ENCODE measurements at regions of chr11 and their contacts with region 1.

Region 1: DNA sequence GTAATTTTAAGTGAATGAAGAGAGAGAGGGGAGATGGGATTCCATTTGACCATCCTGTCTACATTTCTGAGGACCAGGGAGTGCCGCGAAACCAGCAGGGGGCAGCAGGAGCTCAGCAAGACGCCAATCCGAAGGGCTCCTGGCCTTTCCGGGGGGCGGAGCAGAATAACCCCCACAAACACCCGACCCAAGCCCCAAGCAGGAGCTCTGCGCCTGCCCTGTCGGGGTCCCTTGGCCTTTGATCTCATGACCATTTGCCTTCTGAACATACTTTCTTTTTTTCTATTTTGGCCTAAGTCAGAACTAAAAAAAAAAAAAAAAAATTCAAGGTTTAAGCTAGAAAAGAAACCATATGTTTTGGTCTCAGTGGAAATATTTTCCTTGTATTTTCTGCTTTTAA is 21.9 kb upstream of the SCN2B start:
- DNase-seq: peak; percentile 67
- H3K4me3 Mint-ChIP-seq: peak overlapping the region; percentile 21
- H3K27ac Mint-ChIP-seq: peak overlapping the region; percentile 81
- H3K4me1 Mint-ChIP-seq: peaks cover 13% of the 10 kb centered on the region
- H3K27me3 Mint-ChIP-seq: no peaks in the 10 kb centered on the region

Region 2: DNA sequence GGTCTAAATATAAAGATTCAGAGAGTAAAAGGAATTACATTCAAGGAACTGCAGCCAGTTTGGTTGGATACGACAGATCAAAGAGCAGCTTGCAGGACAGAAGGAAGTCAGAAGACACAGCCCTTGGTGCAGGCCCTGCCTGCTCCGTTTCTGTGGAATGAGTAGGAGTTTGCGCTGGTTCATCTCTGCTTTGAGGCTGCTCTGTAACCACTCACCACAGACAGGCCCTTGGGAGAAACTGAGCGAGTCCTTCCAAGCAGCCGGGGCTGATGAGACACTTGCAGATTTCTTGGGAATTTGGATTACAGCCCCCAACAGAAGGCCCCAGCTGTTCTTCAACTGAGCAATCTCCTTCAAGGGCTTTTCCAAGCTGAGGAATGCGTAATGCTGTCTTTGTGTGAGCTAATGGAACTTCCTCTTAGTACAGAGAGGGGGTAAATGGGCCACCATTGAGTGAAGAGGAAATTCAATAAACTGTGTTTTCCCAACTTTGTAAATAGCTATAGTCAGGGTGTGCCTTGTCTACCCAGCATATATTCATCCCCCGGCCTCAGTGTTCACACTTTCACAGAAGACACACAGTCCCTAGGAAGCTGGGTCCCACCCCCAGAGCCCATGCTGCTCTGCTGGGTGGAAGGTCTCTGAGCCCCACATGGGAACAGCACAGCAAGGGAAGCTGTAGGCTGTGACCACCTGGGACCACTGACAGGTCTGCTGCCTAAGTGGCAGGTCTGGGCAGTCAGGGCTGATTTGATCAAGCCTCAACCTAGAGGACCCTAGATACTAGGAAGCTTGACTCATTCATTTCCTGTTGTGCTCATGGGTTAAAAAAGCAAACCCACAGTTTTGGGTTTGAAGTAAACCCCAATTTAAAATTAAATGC is 195.6 kb before region 1 on chr11:
- intact Hi-C with region 1: loop called (anchors 5 kb)
- DNase-seq: peak; percentile 50
- H3K4me3 Mint-ChIP-seq: peak overlapping the region; percentile 61
- H3K27ac Mint-ChIP-seq: peak overlapping the region; percentile 98
- H3K4me1 Mint-ChIP-seq: peaks cover 92% of the 10 kb centered on the region
- H3K27me3 Mint-ChIP-seq: no peaks in the 10 kb centered on the region

Region 3: DNA sequence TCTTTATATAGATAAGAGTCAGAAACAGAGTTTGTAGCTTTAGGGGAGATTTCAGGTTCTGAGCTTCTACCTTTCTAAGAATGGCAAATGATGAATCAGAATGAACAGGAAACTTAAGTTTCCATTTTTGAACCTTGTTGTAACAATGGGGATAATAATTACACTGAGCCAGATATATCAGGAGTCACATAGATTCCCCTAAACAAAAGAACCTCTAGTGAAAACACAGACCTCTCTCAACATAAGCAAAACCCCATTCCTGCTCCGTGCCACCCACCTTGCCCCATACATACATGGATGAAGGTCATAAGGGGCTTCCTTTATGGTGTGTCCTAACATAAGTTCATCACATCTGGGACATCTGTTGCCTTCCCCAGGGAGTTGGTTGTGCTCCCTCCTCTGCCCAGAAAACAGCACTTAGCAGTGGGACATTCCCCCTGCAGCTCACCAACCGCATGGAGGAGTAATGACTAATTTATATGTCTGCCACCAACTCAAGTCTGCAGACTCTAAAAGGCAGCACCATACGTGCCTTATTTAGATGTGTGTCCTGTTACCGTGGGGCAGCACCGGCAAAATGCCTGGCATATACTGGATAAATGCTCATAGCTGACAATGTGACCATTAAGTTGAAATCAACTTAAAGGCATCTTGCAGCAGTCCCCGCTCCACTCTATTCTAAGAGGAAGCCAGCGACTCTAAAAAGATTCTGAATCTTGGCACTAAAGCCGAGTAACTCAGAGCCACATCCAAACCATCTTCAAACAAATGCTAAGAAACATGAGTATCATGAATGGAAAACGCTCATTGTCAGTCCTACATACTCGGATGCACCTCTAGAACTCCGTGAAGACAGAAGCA is 18.5 kb after region 1 on chr11:
- intact Hi-C with region 1: loop called (anchors 1 kb)
- DNase-seq: peak; percentile 41
- H3K4me3 Mint-ChIP-seq: peak overlapping the region; percentile 83
- H3K27ac Mint-ChIP-seq: peak overlapping the region; percentile 94
- H3K4me1 Mint-ChIP-seq: peaks cover 97% of the 10 kb centered on the region
- H3K27me3 Mint-ChIP-seq: no peaks in the 10 kb centered on the region

Region 4: GRCh38 chr11:118247047-118247446 is 48.7 kb after region 1 on chr11:
- intact Hi-C with region 1: loop called (anchors 1 kb)
- DNase-seq: no peak
- H3K4me3 Mint-ChIP-seq: peak overlapping the region; percentile 40
- H3K27ac Mint-ChIP-seq: peak overlapping the region; percentile 96
- H3K4me1 Mint-ChIP-seq: peaks cover 81% of the 10 kb centered on the region
- H3K27me3 Mint-ChIP-seq: no peaks in the 10 kb centered on the region

Region 5: DNA sequence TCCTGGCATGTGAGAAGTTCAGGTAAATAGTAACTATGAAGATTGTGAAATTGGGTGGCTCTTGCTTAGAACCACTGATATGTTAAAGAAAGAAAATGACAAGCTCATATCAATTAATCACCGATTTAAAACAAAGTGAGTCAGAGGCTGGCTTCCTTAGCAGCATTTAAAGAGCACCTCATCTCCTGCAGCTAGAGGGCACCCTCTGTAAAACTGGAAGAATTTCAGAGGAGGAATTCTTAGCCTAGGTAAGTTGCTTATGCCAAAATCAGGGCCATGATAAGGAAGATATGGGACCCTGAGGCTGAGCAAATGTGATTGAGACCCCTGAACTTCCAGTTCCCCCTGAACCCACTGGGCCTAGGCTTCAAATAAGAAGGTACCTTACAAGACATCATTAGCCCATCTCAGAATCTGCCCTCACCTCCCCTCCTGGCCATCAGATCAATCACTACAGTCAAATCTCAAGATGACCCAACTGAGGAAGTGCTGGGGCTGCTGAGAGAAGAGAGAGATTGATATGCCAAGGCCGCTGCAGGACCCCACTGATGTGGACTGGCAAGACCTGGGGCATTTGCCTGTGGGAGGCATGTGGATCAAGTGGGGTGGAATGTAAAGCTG is 97.6 kb after region 1 on chr11:
- intact Hi-C with region 1: loop called (anchors 1 kb)
- DNase-seq: no peak
- H3K4me3 Mint-ChIP-seq: no peak overlapping the region
- H3K27ac Mint-ChIP-seq: no peak overlapping the region
- H3K4me1 Mint-ChIP-seq: peaks cover 29% of the 10 kb centered on the region
- H3K27me3 Mint-ChIP-seq: no peaks in the 10 kb centered on the region

Region 6: GRCh38 chr11:118359295-118359958 is 161.1 kb after region 1 on chr11 and contains the start of gene UBE4A:
- intact Hi-C with region 1: loop called (anchors 1 kb)
- DNase-seq: peak; percentile 94
- H3K4me3 Mint-ChIP-seq: peak within 1 kb of the TSS; percentile 95
- H3K27ac Mint-ChIP-seq: peak within 1 kb of the TSS; percentile 89
- H3K4me1 Mint-ChIP-seq: peaks cover 39% of the 10 kb centered on the region
- H3K27me3 Mint-ChIP-seq: no peaks in the 10 kb centered on the region
- total RNA-seq, gene UBE4A: 44.1 and 46.0 TPM in 2 replicates

Region 7: DNA sequence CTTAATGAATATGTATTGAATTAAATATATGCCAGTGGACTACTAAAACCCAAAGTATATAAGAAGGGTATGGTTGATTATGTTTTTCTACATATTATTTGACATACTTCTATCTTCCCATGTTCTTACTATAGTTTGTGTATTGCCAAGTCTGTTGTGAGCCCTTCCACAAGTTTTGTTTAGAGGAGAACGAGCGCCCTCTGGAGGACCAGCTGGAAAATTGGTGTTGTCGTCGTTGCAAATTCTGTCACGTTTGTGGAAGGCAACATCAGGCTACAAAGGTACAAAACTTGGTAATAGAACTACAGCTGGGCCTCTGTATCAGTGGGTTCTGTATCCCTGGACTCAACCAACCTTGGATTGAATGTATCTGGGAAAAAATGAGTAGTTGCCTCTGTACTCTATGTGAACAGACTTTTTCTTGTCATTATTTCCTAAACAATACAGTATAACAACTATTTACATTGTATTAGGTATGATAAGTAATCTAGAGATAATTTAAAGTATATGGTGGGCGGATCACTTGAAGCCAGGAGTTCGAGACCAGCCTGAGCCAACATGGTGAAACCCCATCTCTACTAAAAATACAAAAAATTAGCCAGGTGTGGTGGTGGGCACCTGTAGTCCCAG is 290.2 kb after region 1 on chr11:
- intact Hi-C with region 1: loop called (anchors 1 kb)
- DNase-seq: peak; percentile 64
- H3K4me3 Mint-ChIP-seq: no peak overlapping the region
- H3K27ac Mint-ChIP-seq: no peak overlapping the region
- H3K4me1 Mint-ChIP-seq: peaks cover 7% of the 10 kb centered on the region
- H3K27me3 Mint-ChIP-seq: no peaks in the 10 kb centered on the region

Measured in activated T-helper 1 cell treated with anti-CD3 and anti-CD28 coated beads, Interleukin-12 subunit alpha, Interleukin-12 subunit beta, Interleukin-2, Interleukin-4 antibody, amounts not matched to agents 30 ng/mL and 10 ng/mL and 1 ng/mL, durations not matched to agents 14 hours and 24 hours and 36 hours (primary cell).